ENCODE measurements at regions of chr10 and their contacts with region 1.

Region 1: DNA sequence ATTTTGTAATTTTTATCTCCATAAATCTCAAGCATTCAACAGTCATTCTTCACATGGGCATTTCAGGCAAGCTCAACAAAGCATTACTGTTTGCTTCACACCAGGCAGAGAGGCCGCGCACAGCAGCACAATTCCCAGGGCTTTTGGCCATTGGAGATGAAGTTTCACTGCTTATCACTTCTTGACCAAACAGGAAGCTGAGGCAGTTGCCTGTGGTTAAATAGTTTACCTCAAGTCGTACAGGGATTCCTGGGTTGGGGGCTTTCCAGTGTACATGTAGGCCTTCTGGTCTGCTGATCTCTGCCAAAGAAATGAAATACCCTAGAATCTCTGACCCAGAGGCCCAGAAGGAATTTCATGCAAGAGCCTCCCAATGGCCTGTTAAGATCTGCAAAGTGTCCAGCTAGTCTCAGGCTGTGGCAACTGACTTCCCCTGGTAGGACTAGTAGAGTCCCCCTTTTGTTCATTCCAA is 11.2 kb upstream of the PRDX3 start:
- DNase-seq: no peak
- H3K4me3 Mint-ChIP-seq: no peak overlapping the region
- H3K27ac Mint-ChIP-seq: peak overlapping the region; percentile 73
- H3K4me1 Mint-ChIP-seq: peaks cover 18% of the 10 kb centered on the region
- H3K27me3 Mint-ChIP-seq: no peaks in the 10 kb centered on the region
- CTCF ChIP-seq: no peak

Region 2: DNA sequence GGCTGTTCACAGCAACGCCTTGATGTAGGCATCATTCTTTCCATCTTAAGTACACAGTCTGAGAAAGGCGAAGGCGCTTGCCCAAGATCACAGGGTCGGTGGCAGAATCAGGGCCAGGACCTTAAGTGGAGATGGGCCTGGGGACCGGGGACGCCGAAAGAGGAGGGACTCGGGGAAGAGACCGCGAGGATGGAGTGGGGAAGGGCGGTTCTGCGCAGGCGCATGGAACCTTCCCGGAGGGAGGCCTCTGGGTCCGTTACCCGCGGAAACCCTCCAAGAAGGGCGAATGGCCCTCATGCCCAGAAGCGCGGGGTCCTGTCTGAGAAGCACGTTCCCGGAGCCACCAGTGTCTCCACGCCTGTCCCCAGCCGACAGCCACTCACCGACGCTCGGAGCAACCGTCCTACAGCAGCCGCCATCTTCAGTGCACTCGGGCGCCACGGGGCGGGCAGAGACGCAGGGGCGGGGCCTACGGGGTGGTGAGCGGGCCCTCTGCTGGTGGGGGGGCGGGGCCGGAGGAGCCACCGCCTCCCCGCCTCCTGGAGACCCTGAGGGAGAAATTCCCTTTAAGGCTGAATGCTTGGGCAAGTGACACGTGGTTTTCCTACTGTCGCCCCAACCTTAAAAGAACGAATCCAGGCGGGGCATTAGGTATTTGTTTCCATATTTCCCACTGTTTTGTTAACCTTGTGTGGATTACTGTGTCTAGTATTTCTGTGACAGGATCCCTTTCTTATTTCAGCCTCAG is 11.3 kb before region 1 on chr10 and contains the start of gene PRDX3:
- CTCF ChIA-PET with region 1: interaction called, 3 read pairs
- POLR2A ChIA-PET with region 1: interaction called, 13 read pairs
- intact Hi-C with region 1: no loop called
- DNase-seq: peak; percentile 88
- H3K4me3 Mint-ChIP-seq: peak within 1 kb of the TSS; percentile 85
- H3K27ac Mint-ChIP-seq: peak within 1 kb of the TSS; percentile 89
- H3K4me1 Mint-ChIP-seq: peaks cover 11% of the 10 kb centered on the region
- H3K27me3 Mint-ChIP-seq: no peaks in the 10 kb centered on the region
- CTCF ChIP-seq: peak; percentile 10
- total RNA-seq, gene PRDX3: 85.6 and 94.4 TPM in 2 replicates

Measured in MCF 10A (cell line).